ENCODE measurements at regions of chr9 and their contacts with region 1.

Region 1: GRCh38 chr9:135478858-135479468 is 619 bp upstream of the PPP1R26 start:
- DNase-seq: peak in 1 of 2 donors; percentile 70
- H3K4me3 ChIP-seq: peak overlapping the region; percentile 84 to 97
- H3K27ac ChIP-seq: peak overlapping the region; percentile 34 to 76
- H3K4me1 ChIP-seq: peaks cover 0 to 9% of the 10 kb centered on the region in 2 donors
- H3K27me3 ChIP-seq: no peaks in the 10 kb centered on the region
- CTCF ChIP-seq: no peak

Region 2: DNA sequence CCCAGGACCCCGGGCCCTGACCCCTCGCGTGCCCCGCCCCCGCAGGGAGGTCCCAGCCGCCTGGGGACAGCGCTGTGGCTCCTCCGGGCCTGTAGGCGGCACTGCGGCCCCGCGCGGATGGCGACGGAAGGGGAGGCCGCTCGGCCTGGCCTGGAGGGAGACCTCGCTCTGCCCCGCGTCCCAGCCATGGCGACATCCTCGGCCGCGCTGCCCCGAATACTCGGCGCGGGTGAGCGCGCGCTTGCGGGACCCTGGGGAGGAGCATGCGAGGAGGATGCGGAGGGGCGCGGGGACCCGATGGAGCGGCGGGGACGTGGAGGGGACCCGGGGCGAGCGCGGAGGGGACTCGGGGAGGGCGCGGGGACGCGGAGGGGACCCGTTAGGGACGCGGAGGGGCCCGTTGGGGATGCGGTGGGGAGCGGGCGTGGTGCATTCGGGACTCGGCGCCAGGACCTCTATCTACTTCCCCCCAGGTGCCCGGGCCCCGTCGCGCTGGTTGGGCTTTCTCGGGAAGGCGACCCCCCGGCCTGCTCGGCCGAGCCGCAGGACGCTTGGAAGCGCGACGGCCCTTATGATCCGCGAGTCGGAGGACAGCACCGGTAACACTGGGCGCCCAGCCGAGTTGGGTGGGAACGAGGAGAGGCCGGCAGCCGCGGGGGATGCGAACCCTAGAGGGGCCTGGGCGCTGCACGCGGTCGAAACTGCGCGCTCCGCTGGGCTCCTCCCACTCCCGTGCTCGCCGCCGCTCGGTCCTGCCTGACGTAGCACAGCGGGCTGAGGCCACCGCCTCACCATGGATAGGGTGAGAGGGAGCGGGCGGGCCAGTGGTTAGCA is 21.8 kb after region 1 on chr9 and contains the start of gene MRPS2:
- intact Hi-C with region 1: loop called (anchors 1 kb)
- DNase-seq: peak; percentile 38 to 93
- H3K4me3 ChIP-seq: peak within 1 kb of the TSS; percentile 73 to 75
- H3K27ac ChIP-seq: peak within 1 kb of the TSS; percentile 69 to 75
- H3K4me1 ChIP-seq: peaks cover 12 to 17% of the 10 kb centered on the region in 2 donors
- H3K27me3 ChIP-seq: no peaks in the 10 kb centered on the region
- CTCF ChIP-seq: peak; percentile 85 to 97 (median 93)
- total RNA-seq, gene MRPS2: 57.3 TPM